ENCODE measurements at regions of chr7 and their contacts with region 1.

Region 1: GRCh38 chr7:139043823-139044812 is 8.3 kb upstream of the ZC3HAV1L start:
- DNase-seq: peak; percentile 43 to 83 (median 78)
- ATAC-seq: peak; percentile 75
- H3K4me3 ChIP-seq: no peak overlapping the region
- H3K4me3 Mint-ChIP-seq: peak overlapping the region; percentile 24
- H3K27ac ChIP-seq: peak overlapping the region in 1 of 2 experiments; percentile 59
- H3K27ac Mint-ChIP-seq: peak overlapping the region; percentile 89
- H3K4me1 ChIP-seq: peaks cover 24% of the 10 kb centered on the region
- H3K4me1 Mint-ChIP-seq: peaks cover 61% of the 10 kb centered on the region
- H3K27me3 ChIP-seq: no peaks in the 10 kb centered on the region
- H3K27me3 Mint-ChIP-seq: no peaks in the 10 kb centered on the region
- CTCF ChIP-seq: no peak

Region 2: GRCh38 chr7:138186951-138187351 is 857.2 kb before region 1 on chr7:
- CTCF ChIA-PET with region 1: no interaction called
- POLR2A ChIA-PET with region 1: no interaction called
- intact Hi-C with region 1: no loop called
- DNase-seq: no peak
- ATAC-seq: no peak
- H3K4me3 ChIP-seq: no peak overlapping the region
- H3K4me3 Mint-ChIP-seq: no peak overlapping the region
- H3K27ac ChIP-seq: no peak overlapping the region
- H3K27ac Mint-ChIP-seq: no peak overlapping the region
- H3K4me1 ChIP-seq: no peaks in the 10 kb centered on the region
- H3K4me1 Mint-ChIP-seq: no peaks in the 10 kb centered on the region
- H3K27me3 ChIP-seq: no peaks in the 10 kb centered on the region
- H3K27me3 Mint-ChIP-seq: peaks cover 4% of the 10 kb centered on the region
- CTCF ChIP-seq: no peak

Region 3: DNA sequence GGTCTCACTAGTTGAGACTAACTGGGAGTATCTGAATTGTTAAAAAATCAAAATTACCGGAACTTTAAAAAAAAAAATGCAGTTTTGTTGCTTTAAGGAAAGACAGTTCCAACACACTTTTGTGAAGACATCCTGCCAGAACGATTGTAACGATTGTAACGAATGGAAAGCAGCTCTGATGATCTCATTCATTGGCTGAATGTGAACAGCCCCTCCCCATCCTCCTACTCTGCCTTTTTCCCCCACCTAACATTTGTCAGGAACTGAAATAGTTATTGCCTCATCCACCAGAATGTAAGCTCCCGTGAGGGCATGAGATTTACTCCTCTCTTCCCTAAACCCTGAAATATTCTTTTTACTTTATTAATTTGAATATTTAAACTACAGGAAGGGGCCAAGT is 14.8 kb after region 1 on chr7:
- CTCF ChIA-PET with region 1: interaction called, 4 read pairs
- POLR2A ChIA-PET with region 1: interaction called, 4 read pairs
- intact Hi-C with region 1: loop called in 1 of 2 experiments (anchors 2 kb)
- DNase-seq: no peak
- ATAC-seq: no peak
- H3K4me3 ChIP-seq: no peak overlapping the region
- H3K4me3 Mint-ChIP-seq: no peak overlapping the region
- H3K27ac ChIP-seq: peak overlapping the region in 1 of 2 experiments; percentile 12
- H3K27ac Mint-ChIP-seq: peak overlapping the region; percentile 81
- H3K4me1 ChIP-seq: peaks cover 21% of the 10 kb centered on the region
- H3K4me1 Mint-ChIP-seq: peaks cover 55% of the 10 kb centered on the region
- H3K27me3 ChIP-seq: no peaks in the 10 kb centered on the region
- H3K27me3 Mint-ChIP-seq: no peaks in the 10 kb centered on the region
- CTCF ChIP-seq: no peak

Region 4: DNA sequence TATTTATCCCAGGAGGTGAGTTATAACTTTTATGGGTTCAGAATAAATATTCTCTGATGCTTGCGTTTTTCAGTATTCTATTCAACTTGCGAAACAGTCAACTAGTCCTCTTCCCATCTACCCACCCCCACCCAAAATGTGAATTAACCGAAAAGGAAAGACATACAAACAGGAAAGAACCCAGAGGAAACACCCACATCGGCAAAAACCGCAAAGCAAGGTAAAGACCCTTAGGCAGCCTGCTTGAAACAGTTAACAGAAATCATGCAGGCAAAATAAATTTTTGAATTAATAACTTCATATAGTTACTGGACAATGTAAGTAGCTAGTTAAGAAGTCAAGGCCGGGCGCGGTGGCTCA is 60.0 kb after region 1 on chr7:
- CTCF ChIA-PET with region 1: interaction called, 4 read pairs
- POLR2A ChIA-PET with region 1: no interaction called
- intact Hi-C with region 1: loop called in 1 of 2 experiments (anchors 2 kb)
- DNase-seq: peak in 5 of 9 experiments; percentile 28 to 76 (median 48)
- ATAC-seq: no peak
- H3K4me3 ChIP-seq: peak overlapping the region; percentile 61 to 99
- H3K4me3 Mint-ChIP-seq: peak overlapping the region; percentile 93
- H3K27ac ChIP-seq: peak overlapping the region; percentile 61 to 97
- H3K27ac Mint-ChIP-seq: peak overlapping the region; percentile 93
- H3K4me1 ChIP-seq: peaks cover 21% of the 10 kb centered on the region
- H3K4me1 Mint-ChIP-seq: peaks cover 45% of the 10 kb centered on the region
- H3K27me3 ChIP-seq: no peaks in the 10 kb centered on the region
- H3K27me3 Mint-ChIP-seq: no peaks in the 10 kb centered on the region
- CTCF ChIP-seq: no peak

Region 5: DNA sequence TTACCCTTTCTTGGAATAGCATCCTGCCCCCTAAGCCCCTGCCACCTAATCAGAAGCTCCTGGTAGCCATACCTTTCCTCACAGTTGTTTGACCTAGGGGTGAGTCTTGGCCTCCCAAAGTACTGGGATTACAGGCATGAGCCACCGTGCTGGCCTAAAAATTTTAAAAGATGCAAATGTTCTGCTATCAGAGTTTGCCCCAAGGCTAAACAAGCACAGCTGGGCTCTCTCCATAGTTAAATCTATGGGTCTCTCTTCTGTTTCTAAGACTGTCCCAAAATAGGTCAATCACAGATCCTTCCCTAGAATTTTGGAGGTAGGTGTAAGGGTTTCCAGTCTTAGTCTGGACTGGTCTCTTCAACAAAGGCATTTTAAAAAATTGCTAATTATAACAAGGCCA is 174.1 kb after region 1 on chr7:
- CTCF ChIA-PET with region 1: no interaction called
- POLR2A ChIA-PET with region 1: no interaction called
- intact Hi-C with region 1: no loop called
- DNase-seq: no peak
- ATAC-seq: no peak
- H3K4me3 ChIP-seq: no peak overlapping the region
- H3K4me3 Mint-ChIP-seq: no peak overlapping the region
- H3K27ac ChIP-seq: no peak overlapping the region
- H3K27ac Mint-ChIP-seq: no peak overlapping the region
- H3K4me1 ChIP-seq: no peaks in the 10 kb centered on the region
- H3K4me1 Mint-ChIP-seq: no peaks in the 10 kb centered on the region
- H3K27me3 ChIP-seq: no peaks in the 10 kb centered on the region
- H3K27me3 Mint-ChIP-seq: peaks cover 4% of the 10 kb centered on the region
- CTCF ChIP-seq: no peak